ENCODE measurements at regions of chr11 and their contacts with region 1.

Region 1: GRCh38 chr11:81787584-81788049 is 946.0 kb downstream of the FAM181B start:
- DNase-seq: no peak
- ATAC-seq: no peak
- H3K4me3 ChIP-seq: no peak overlapping the region
- H3K27ac ChIP-seq: no peak overlapping the region
- H3K4me1 ChIP-seq: no peaks in the 10 kb centered on the region
- H3K27me3 ChIP-seq: no peaks in the 10 kb centered on the region
- CTCF ChIP-seq: no peak
- POLR2A ChIP-seq: no peak

Region 2: GRCh38 chr11:81804858-81805257 is 17.2 kb after region 1 on chr11:
- intact Hi-C with region 1: loop called in 2 of 10 experiments (anchors 2 kb)
- DNase-seq: no peak
- ATAC-seq: no peak
- H3K4me3 ChIP-seq: no peak overlapping the region
- H3K27ac ChIP-seq: no peak overlapping the region
- H3K4me1 ChIP-seq: no peaks in the 10 kb centered on the region
- H3K27me3 ChIP-seq: no peaks in the 10 kb centered on the region
- CTCF ChIP-seq: no peak
- POLR2A ChIP-seq: no peak

Region 3: GRCh38 chr11:81822201-81822600 is 34.6 kb after region 1 on chr11:
- intact Hi-C with region 1: loop called in 1 of 10 experiments (anchors 5 kb)
- DNase-seq: no peak
- ATAC-seq: no peak
- H3K4me3 ChIP-seq: no peak overlapping the region
- H3K27ac ChIP-seq: no peak overlapping the region
- H3K4me1 ChIP-seq: no peaks in the 10 kb centered on the region
- H3K27me3 ChIP-seq: peaks cover 0 to 6% (median 0%) of the 10 kb centered on the region in 9 donors
- CTCF ChIP-seq: no peak
- POLR2A ChIP-seq: no peak